ENCODE measurements at regions of chr2 and their contacts with region 1.

Region 1: DNA sequence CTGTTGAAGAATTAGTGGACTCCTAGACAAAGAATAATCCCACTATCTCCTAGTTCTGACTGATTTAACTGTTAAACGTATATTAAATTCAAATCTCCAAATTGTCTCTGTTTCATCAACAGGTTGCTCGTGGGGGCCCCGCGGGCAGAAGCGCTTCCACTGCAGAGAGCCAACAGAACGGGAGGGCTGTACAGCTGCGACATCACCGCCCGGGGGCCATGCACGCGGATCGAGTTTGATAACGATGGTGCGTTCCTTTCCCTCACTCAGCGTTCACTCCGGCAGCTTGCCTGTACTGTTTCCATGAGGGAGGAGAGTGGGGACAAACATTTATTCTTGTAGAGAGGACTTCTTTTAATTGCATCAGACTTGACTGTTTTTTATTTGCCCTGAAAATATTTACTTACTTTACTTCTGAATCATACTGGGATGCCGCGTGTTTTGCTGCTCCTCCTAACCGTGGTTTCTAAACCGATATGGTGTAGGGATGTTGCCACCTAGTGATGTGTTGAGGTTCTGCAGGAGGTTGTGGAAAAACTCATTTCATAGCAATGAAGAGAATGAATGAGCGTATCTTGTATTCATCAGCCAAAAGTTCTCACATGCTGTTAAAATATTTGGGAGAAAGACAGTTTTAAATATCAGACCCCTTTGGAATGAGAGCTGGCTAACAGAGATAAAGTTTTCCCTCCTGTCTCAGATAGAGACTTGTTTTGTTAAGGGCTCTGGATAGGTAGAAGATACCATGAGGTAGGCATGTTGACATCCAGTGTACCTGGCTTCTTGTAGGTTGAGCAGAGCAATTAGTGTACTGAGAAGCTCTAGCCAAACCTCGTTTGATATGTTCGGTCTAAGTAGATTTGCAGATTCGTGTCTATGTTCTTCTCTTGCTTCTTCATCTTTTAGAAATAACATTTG is 38.3 kb downstream of the ITGA6 start:
- DNase-seq: peak; percentile 72
- H3K4me3 ChIP-seq: peak overlapping the region; percentile 44
- H3K27ac ChIP-seq: no peak overlapping the region
- H3K27me3 ChIP-seq: no peaks in the 10 kb centered on the region
- CTCF ChIP-seq: peak; percentile 86

Region 2: DNA sequence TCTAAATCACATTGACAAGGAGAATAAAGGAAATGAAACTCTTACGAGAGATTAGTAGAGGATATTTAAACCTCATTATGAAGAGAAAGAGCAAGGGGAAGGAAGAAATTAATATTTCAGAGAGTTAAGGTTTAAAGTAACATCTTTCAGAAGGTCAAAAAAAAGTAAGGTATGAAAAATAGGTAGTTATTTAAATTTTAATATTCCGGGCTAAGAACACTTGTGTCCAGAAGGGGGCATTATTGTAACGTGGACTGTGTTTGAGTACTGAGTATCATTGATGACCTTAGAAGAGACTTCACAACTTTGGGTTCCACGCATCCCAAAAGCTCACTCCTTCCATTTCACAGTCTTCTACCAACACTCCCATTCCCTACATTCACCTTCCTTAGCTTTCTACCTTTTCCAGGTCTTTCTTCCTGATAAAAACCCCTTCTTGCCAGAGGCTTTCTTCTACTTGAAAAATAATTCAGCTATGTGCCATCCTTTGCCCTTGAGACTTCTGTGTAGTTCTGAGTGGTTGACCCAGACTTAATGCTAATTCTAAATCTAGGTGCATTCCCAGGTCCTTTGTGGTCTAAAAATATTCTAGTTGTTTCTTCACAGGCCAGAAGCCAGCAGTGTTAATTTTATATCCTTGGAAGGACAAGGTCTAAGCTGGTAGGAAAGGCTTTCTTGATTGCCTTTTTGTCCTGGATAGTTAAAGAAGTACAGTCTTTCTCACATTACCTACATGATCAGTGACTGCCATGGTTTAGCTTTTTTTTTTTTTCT is 761.9 kb before region 1 on chr2:
- CTCF ChIA-PET with region 1: interaction called, 13 read pairs
- POLR2A ChIA-PET with region 1: no interaction called
- DNase-seq: no peak
- H3K4me3 ChIP-seq: no peak overlapping the region
- H3K27ac ChIP-seq: no peak overlapping the region
- H3K27me3 ChIP-seq: no peaks in the 10 kb centered on the region
- CTCF ChIP-seq: peak; percentile 65

Region 3: GRCh38 chr2:172131713-172132555 is 333.7 kb before region 1 on chr2:
- CTCF ChIA-PET with region 1: interaction called, 15 read pairs
- POLR2A ChIA-PET with region 1: no interaction called
- DNase-seq: no peak
- H3K4me3 ChIP-seq: no peak overlapping the region
- H3K27ac ChIP-seq: no peak overlapping the region
- H3K27me3 ChIP-seq: peaks cover 3% of the 10 kb centered on the region
- CTCF ChIP-seq: no peak

Region 4: GRCh38 chr2:172200495-172201085 is 265.1 kb before region 1 on chr2:
- CTCF ChIA-PET with region 1: interaction called, 66 read pairs
- POLR2A ChIA-PET with region 1: no interaction called
- DNase-seq: no peak
- H3K4me3 ChIP-seq: no peak overlapping the region
- H3K27ac ChIP-seq: no peak overlapping the region
- H3K27me3 ChIP-seq: no peaks in the 10 kb centered on the region
- CTCF ChIP-seq: peak; percentile 58

Region 5: DNA sequence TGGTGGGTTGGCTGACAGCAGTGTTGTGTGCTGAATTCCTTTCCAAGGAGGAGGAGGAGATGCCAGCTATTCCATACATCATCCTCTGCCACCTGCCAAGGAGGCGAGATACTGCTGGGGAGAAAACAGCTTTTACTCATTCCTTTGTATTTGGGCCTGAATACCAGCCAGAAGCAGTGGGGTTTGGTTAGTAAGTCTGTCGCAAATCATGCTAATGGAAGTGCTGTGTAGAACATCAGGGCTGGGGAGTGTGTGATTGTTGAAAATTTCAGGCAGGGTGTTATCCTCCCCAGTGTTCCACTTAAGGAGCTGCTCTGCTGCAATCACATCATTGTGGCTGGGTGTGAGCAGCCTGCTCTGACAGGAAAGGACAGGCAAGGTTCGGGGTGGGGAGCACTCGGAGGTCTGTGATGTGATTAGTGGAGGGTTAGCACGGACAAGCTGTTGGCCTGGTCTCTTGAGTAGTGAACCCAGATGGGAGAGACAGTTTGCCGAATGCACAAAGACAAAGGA is 234.7 kb before region 1 on chr2:
- CTCF ChIA-PET with region 1: interaction called, 10 read pairs
- POLR2A ChIA-PET with region 1: interaction called, 5 read pairs
- DNase-seq: no peak
- H3K4me3 ChIP-seq: no peak overlapping the region
- H3K27ac ChIP-seq: no peak overlapping the region
- H3K27me3 ChIP-seq: peaks cover 2% of the 10 kb centered on the region
- CTCF ChIP-seq: no peak

Region 6: DNA sequence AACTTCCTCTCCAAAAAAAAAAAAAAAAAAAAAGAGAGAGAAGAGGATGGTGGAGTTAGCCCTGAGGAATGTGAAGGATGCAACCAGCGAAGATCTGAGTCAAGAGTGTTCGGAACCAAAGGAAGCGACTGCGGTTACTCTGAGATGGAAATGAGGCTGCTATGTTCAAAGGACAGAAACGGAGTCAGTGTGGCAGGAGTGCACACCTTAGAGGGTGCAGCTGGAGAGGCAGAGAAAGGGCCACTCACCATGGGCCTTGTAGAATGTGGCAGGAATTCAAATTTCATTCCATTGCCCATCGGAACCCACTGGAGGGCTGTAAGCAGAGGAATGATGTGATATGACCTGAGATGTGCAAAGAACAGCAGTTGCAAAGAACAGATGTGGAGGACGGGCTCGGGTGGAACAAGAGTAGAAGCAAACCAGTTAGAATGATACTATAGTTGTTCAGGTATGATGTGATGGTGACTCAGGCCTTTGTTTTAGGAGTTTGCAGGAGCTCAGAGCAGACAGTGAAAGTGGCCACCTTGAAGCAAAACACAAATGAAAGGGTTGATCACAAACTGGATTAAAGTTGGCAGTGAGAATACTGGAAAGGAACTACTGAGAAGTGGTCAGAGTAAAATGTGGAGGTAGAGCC is 15.6 kb before region 1 on chr2:
- CTCF ChIA-PET with region 1: interaction called, 68 read pairs
- POLR2A ChIA-PET with region 1: no interaction called
- DNase-seq: no peak
- H3K4me3 ChIP-seq: no peak overlapping the region
- H3K27ac ChIP-seq: peak overlapping the region; percentile 21
- H3K27me3 ChIP-seq: no peaks in the 10 kb centered on the region
- CTCF ChIP-seq: no peak

Measured in AG04450 (cell line).